ENCODE measurements at regions of chr4 and their contacts with region 1.

Region 1: DNA sequence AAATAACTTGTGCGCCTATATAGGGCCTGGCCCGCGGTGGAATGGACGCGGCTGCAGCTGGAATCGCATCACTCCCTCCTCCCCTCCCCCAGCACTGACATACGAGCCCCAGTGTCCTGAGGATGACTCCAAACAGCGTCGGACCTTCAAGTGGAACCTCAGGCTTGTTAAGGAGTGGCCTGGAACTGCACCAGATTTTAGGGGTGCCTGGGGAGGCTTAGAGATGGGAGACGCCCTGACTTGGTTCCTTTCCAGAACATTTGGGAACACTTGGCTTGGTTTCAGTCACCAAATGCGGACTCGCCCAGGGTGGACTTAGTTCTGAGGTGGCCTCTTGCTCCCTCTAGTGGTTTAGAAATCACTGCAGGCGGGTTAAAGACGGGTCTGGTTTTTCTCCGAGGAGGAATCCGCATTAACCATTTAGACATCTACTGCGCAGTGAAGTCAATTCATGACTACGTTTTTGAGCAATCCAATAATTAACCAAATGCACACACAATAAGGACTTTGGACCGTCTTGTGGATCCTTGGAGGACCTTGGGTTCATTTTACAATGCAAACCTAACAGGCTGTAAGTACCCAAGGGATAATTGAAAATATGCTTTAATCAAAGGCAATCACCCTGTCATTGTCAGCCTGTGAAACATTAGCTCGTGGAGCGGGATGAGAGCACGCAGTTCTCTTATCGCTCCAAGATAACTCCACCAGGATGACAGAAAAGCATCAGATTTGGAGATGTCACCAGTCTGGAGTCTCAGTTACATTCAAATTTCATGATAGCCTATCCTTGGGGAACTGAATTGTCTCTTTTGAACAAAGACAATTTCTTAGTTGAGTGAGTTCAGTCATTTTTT is 11.2 kb upstream of the PDGFRA start:
- DNase-seq: peak; percentile 78

Region 2: DNA sequence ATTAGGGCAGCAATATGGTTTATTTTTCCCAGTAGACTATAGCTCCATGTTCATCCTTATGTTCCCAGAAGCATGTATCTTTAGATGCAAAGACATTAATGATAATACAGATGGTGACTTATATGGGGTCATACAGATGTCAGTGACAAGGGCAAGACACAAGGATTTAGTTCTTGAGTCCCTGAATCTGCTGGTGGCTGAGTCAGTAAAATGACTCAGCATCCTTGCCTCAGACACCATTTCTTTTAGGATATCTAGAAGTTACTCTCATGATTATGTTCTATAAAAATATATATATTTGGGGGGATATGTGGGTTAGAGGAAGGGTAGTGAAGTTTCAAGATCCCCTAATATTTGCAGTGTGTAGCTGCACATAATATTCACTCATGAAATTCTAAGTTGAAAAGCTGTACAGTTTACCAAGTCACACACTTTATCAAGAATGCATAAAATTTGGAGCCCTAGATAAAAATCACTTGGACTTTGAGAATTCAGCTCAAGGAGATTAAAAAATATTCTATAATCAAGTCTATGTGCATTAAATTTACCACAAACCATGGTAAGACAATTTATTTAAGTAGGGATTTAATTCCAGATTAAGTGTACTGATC is 728.5 kb before region 1 on chr4:
- intact Hi-C with region 1: loop called (anchors 5 kb)
- DNase-seq: no peak

Region 3: DNA sequence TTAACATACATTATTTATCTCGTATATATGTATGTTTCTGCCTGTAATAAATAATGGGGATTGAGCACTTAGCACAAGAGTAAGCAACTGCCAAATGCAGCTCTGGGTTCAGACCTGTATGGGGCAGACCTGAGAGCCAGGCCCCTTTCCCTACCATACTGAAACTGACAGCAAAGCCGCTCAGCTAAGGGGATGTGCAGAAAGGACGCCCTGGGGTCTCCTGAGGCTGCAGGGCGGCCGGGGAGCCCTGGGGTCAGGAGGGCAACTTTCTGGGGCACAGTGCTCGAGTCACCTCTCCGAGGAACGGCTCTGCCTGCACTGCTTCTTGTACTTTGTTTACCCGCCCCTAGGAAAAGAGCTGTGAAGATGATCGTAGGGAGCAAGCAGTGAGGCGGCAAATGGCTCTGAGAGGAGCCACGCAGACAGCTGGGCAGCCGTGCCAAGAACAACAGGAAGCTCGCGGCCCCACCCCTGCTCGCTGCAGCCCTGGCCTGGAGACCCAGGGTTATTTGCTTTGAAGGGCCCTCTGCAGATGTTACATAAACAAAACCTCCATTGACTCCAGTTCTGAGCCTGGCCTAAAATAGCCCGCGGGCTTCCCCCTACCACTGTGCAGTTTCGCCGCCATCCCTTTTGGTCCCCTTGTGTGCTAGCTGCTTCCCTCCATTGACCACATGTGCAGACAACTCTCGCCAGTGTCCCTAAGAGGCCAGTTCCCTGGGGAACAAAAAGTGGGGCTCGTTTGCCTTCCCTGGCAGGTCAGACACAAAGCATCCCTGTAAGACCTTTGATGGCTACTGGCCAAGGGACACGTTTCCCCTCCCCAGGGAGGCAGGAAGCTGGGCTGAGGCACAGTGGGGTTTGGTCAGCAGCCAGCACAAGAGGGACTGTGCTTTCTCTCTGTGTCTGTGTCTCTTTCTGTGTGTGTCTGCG is 515.3 kb before region 1 on chr4:
- intact Hi-C with region 1: loop called (anchors 5 kb)
- DNase-seq: peak; percentile 85

Region 4: DNA sequence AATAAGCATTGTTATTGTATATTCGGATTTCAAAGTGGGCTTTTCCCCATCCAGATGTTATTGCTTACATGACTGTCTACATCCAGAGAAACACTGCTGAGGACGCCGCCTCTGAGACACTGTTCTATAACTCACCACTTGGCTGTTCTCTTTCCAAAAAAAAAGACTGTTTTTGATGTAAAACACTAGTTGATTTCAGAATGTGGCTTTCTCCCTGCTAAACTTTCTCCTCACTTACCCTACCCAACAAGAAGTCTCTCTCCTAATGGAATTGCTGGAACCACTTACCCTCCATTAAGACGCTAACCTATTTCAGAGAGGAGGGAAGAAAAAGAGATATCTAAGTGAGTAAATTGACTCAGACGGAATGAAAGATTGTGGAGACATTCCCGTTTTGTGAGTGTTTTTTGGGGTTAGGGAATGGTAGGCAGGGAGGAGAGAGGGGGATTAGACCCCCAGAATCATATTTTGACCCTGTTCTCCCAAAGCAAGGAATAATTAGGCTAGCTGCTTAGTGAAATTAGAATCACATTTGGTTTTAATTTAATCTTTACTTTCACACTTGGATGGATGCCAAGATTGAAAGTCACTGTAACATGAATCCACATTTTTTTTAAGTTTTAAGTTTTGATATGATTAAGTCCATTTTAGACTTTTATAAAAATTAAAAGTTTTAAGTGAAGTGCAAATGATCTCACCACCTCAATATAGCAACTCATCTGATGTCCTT is 328.4 kb before region 1 on chr4:
- intact Hi-C with region 1: no loop called
- DNase-seq: no peak

Region 5: GRCh38 chr4:53929955-53930798 is 287.7 kb before region 1 on chr4:
- intact Hi-C with region 1: loop called (anchors 2 kb)
- DNase-seq: peak; percentile 82

Region 6: GRCh38 chr4:54099748-54100574 is 117.9 kb before region 1 on chr4 and contains the start of gene GSX2:
- intact Hi-C with region 1: loop called (anchors 10 kb)
- DNase-seq: no peak
- total RNA-seq, gene GSX2: not detected

Region 7: GRCh38 chr4:54118850-54119589 is 98.8 kb before region 1 on chr4:
- intact Hi-C with region 1: no loop called
- DNase-seq: no peak